ENCODE measurements at regions of chr1 and their contacts with region 1.

Region 1: DNA sequence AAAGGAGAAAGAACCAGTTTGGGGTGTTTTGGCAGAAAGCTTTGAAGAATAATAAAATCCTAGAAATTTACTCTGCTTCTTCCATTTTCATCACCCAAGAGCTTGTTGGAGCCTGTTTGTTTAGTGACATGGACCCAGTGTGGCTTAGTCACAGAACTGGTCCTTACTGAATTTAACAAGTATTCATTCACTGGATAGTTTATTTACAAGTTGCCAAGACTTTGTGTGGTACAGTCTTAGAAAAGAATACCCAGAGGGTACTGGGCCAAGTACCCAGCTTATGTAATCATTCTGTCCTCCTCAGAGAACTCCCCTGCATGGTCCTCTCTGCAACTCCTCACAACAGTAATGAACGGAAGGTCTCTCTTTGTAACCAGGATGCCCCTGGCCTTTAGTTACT is 16.4 kb downstream of the RAB4A start:
- DNase-seq: no peak
- H3K4me3 Mint-ChIP-seq: no peak overlapping the region
- H3K27ac Mint-ChIP-seq: no peak overlapping the region
- H3K4me1 Mint-ChIP-seq: peaks cover 30% of the 10 kb centered on the region
- H3K27me3 Mint-ChIP-seq: no peaks in the 10 kb centered on the region

Region 2: DNA sequence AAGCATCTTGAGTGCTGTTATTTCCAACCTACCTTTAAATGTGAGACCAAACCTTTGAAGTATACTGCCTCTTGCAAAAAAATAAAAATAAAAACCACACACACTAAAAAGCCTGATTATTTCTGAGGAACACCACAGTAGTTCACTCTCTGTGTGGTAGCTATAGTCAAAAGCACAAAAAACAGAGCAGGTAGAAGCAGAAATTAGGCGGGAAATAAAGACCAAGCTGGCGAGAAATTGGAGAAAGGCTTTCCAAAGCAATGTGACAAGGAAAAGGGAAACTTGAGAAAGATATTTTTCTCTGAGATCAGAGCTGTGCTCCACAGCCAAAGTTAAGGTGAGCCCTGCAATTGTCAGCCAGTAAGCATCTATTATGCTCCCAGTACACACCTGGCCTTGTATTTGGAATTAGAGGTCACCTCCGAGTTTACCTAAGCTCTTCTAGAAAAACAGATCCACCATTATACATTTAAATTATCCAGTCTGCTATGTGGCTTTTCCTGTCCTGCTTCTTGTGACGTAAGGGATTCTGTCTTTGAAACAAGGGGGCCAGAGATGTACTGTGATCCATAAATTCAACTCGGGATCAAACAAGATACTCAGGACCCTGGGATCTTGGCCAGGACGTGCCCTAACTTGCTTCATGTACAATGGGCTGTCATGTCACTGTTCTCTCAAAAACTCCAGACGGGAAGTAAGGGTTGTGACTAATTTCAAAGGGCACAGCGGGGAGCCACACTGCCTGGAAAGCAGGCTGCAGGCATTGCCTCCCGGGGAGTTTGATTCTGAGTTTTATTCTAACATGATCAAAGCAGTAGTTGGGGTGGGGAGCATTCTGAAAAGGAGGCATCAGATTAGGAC is 56.1 kb before region 1 on chr1:
- intact Hi-C with region 1: no loop called
- DNase-seq: no peak
- H3K4me3 Mint-ChIP-seq: no peak overlapping the region
- H3K27ac Mint-ChIP-seq: no peak overlapping the region
- H3K4me1 Mint-ChIP-seq: peaks cover 12% of the 10 kb centered on the region
- H3K27me3 Mint-ChIP-seq: peaks cover 31% of the 10 kb centered on the region

Region 3: GRCh38 chr1:229247871-229248270 is 39.4 kb before region 1 on chr1:
- intact Hi-C with region 1: no loop called
- DNase-seq: no peak
- H3K4me3 Mint-ChIP-seq: no peak overlapping the region
- H3K27ac Mint-ChIP-seq: no peak overlapping the region
- H3K4me1 Mint-ChIP-seq: peaks cover 22% of the 10 kb centered on the region
- H3K27me3 Mint-ChIP-seq: peaks cover 12% of the 10 kb centered on the region

Region 4: DNA sequence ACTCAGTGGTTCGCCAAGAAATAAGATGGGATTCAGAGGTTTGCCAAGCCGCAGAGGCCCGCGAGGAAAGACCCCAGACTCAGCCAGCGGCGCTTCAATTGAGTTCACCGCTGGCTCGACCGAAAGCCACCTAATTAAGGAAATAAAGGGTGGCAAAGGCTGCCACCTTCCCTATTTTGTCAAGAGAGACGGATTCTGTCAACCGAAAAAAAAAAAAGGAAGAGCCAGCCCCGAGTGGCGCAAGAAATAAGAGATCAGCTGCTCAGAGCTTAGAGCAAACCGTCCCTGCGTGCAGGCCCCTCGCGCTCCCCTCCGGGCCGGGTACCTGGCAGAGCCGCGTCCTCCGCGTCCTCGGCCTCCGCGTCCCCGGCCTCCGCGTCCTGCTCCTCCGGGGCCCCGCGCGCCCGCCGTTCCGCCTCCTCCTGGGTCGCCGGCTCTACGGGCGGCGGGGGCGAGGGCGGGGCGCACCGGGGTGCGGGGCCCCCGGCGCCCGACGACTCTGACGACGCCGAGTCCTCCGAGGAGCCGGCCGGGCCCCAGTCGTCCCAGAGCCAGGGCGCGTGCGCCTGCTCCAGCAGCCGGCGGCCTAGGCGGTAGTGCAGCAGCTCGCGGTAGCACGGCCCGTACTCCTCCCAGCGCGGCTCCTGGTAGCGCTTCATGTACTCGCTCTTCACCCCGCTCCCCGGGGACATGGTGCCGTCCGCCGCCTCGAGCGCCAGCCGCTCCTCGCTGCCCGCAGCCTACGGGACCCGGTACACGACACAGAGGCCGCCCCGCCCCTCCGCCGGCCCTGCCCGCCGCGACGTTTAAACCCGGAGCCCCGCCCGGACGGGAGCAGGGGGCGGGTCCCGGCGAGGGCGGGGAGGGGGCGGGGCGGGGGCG is 54.7 kb after region 1 on chr1:
- intact Hi-C with region 1: loop called (anchors 5 kb)
- DNase-seq: peak; percentile 96
- H3K4me3 Mint-ChIP-seq: peak overlapping the region; percentile 91
- H3K27ac Mint-ChIP-seq: peak overlapping the region; percentile 94
- H3K4me1 Mint-ChIP-seq: peaks cover 48% of the 10 kb centered on the region
- H3K27me3 Mint-ChIP-seq: peaks cover 20% of the 10 kb centered on the region

Measured in activated CD4-positive, alpha-beta T cell treated with anti-CD3 and anti-CD28 coated beads, Interleukin-2, amount 10 ng/mL, durations not matched to agents 24 days and 14 days (primary cell).